HepG2 (cell line): ENCODE measurements at regions of chr13 and their contacts with region 1.

Region 1: GRCh38 chr13:43905435-43906031 is 25.8 kb downstream of the LACC1 start:
- DNase-seq: peak; percentile 55
- ATAC-seq: peak; percentile 57
- H3K4me3 ChIP-seq: no peak overlapping the region
- H3K27ac ChIP-seq: no peak overlapping the region
- H3K4me1 ChIP-seq: no peaks in the 10 kb centered on the region
- H3K27me3 ChIP-seq: no peaks in the 10 kb centered on the region
- CTCF ChIP-seq: peak; percentile 72
- EP300 ChIP-seq: no peak
- POLR2A ChIP-seq: no peak
- RAD21 ChIP-seq: 0 out of 2 replicates have a peak, but pooled peaks have one; percentile 57

Region 2: DNA sequence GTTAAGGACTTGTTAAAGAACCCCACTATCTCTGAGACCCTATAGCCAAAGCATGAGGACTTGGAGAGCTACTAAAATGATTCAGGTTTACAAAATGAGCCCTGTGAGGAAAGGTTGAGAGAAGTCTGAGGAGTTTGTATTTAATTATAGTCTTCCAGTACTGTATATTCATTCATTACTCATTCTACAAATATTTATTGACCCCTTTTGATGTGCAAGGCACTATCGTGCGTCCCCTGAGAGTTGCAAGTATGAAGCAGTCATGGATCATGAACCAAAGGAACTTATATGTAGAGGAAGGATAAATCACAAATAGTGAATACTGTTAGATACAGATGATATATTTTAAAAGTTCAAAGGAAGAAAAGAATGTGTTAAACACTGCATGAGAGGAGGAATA is 797.8 kb before region 1 on chr13:
- CTCF ChIA-PET with region 1: no interaction called
- POLR2A ChIA-PET with region 1: no interaction called
- in situ Hi-C with region 1: no loop called
- intact Hi-C with region 1: no loop called
- DNase-seq: no peak
- ATAC-seq: no peak
- H3K4me3 ChIP-seq: no peak overlapping the region
- H3K27ac ChIP-seq: no peak overlapping the region
- H3K4me1 ChIP-seq: no peaks in the 10 kb centered on the region
- H3K27me3 ChIP-seq: no peaks in the 10 kb centered on the region
- CTCF ChIP-seq: no peak
- EP300 ChIP-seq: no peak
- POLR2A ChIP-seq: no peak
- RAD21 ChIP-seq: no peak

Region 3: DNA sequence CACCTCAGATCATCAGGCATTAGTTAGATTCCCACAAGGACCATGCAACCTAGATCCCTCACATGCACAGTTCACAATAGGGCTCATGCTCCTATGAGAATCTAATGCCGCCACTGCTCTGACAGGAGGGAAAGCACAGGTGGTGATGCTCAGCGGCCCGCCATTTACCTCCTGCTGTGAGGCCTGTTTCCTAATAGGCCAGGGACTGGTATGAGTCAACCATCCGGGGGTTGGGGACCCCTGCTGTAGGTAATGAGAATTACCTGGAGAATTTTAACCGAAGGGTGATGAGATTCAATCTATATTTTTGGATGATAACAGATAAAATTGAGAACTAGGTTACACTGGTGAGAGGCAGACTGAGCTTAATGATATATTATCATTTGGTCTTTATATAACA is 75.6 kb after region 1 on chr13:
- CTCF ChIA-PET with region 1: no interaction called
- POLR2A ChIA-PET with region 1: no interaction called
- in situ Hi-C with region 1: no loop called
- intact Hi-C with region 1: loop called (anchors 1 kb)
- DNase-seq: peak; percentile 2
- ATAC-seq: peak; percentile 68
- H3K4me3 ChIP-seq: no peak overlapping the region
- H3K27ac ChIP-seq: no peak overlapping the region
- H3K4me1 ChIP-seq: no peaks in the 10 kb centered on the region
- H3K27me3 ChIP-seq: no peaks in the 10 kb centered on the region
- CTCF ChIP-seq: no peak
- EP300 ChIP-seq: no peak
- POLR2A ChIP-seq: no peak
- RAD21 ChIP-seq: no peak

Region 4: GRCh38 chr13:44050450-44051063 is 145.0 kb after region 1 on chr13:
- CTCF ChIA-PET with region 1: interaction called, 7 read pairs
- POLR2A ChIA-PET with region 1: no interaction called
- in situ Hi-C with region 1: loop called (anchors 5 kb)
- intact Hi-C with region 1: loop called (anchors 1 kb)
- DNase-seq: peak; percentile 7
- ATAC-seq: no peak
- H3K4me3 ChIP-seq: no peak overlapping the region
- H3K27ac ChIP-seq: no peak overlapping the region
- H3K4me1 ChIP-seq: no peaks in the 10 kb centered on the region
- H3K27me3 ChIP-seq: no peaks in the 10 kb centered on the region
- CTCF ChIP-seq: peak; percentile 41
- EP300 ChIP-seq: no peak
- POLR2A ChIP-seq: no peak
- RAD21 ChIP-seq: no peak

Region 5: GRCh38 chr13:44174769-44175425 is 269.4 kb after region 1 on chr13:
- CTCF ChIA-PET with region 1: no interaction called
- POLR2A ChIA-PET with region 1: no interaction called
- in situ Hi-C with region 1: no loop called
- intact Hi-C with region 1: no loop called
- DNase-seq: no peak
- ATAC-seq: peak; percentile 24; the same call in 1 of the 3 replicates
- H3K4me3 ChIP-seq: no peak overlapping the region
- H3K27ac ChIP-seq: no peak overlapping the region
- H3K4me1 ChIP-seq: no peaks in the 10 kb centered on the region
- H3K27me3 ChIP-seq: no peaks in the 10 kb centered on the region
- CTCF ChIP-seq: no peak
- EP300 ChIP-seq: no peak
- POLR2A ChIP-seq: no peak
- RAD21 ChIP-seq: no peak

Region 6: DNA sequence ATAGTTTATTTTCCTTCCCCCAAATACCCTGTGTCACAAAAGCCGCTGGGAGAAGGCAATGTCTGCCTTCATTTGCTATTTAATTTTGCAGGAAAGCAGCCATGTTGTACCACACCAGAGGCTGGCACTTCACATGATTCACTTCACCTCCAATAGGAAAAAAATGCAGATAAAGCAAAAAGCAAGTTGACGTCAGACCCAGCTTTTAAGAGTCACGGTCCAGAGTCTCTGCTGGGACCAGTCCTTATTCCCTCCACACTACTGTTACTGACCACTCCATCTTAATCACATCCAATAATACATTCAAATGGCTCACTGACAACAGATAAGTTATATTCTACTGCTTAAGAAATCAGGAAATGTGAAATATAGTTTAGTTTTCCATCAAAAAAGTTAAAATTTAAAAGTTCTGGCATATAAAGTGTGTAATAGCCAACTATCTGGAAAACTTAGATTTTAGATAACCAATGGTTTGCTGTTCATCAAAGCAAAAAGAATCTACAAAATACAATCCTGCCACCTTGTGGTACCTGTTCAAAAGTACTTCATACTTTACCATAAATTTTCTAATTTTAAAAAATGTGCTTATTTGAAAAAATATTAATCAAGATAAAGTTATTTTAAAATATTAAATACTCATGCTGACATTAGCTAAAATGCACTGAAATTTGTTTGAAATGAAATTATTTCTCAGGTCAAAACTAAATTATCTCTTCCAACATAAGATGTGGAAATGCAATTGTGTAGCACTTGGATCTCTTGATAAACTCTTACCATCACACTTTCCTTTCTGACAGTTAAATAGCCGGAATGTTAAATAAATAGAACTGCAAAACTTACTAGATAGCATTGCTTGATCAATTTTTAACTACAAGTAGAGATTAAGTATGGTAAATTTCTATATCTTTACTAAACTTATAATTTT is 565.4 kb after region 1 on chr13:
- CTCF ChIA-PET with region 1: interaction called, 22 read pairs
- POLR2A ChIA-PET with region 1: no interaction called
- in situ Hi-C with region 1: loop called (anchors 5 kb)
- intact Hi-C with region 1: loop called (anchors 1 kb)
- DNase-seq: peak; percentile 29
- ATAC-seq: no peak
- H3K4me3 ChIP-seq: no peak overlapping the region
- H3K27ac ChIP-seq: no peak overlapping the region
- H3K4me1 ChIP-seq: no peaks in the 10 kb centered on the region
- H3K27me3 ChIP-seq: no peaks in the 10 kb centered on the region
- CTCF ChIP-seq: peak; percentile 47
- EP300 ChIP-seq: no peak
- POLR2A ChIP-seq: no peak
- RAD21 ChIP-seq: 0 out of 2 replicates have a peak, but pooled peaks have one; percentile 26

Region 7: GRCh38 chr13:44969551-44970484 is 1064.3 kb after region 1 on chr13:
- CTCF ChIA-PET with region 1: no interaction called
- POLR2A ChIA-PET with region 1: no interaction called
- in situ Hi-C with region 1: loop called (anchors 25 kb)
- intact Hi-C with region 1: loop called (anchors 10 kb)
- DNase-seq: peak; percentile 49
- ATAC-seq: peak; percentile 69
- H3K4me3 ChIP-seq: no peak overlapping the region
- H3K27ac ChIP-seq: no peak overlapping the region
- H3K4me1 ChIP-seq: peaks cover 16% of the 10 kb centered on the region
- H3K27me3 ChIP-seq: no peaks in the 10 kb centered on the region
- CTCF ChIP-seq: peak; percentile 72
- EP300 ChIP-seq: no peak
- POLR2A ChIP-seq: no peak
- RAD21 ChIP-seq: 0 out of 2 replicates have a peak, but pooled peaks have one; percentile 26